ENCODE measurements at regions of chr5 and their contacts with region 1.

Region 1: GRCh38 chr5:169442403-169442874 is 141.1 kb upstream of the SPDL1 start:
- DNase-seq: no peak
- H3K4me3 ChIP-seq: no peak overlapping the region
- H3K4me3 Mint-ChIP-seq: peak overlapping the region; percentile 25
- H3K27ac Mint-ChIP-seq: peak overlapping the region; percentile 23
- H3K4me1 ChIP-seq: peaks cover 62% of the 10 kb centered on the region
- H3K4me1 Mint-ChIP-seq: peaks cover 46% of the 10 kb centered on the region
- H3K27me3 ChIP-seq: no peaks in the 10 kb centered on the region
- H3K27me3 Mint-ChIP-seq: no peaks in the 10 kb centered on the region
- CTCF ChIP-seq: no peak

Region 2: GRCh38 chr5:168822745-168823281 is 619.6 kb before region 1 on chr5:
- CTCF ChIA-PET with region 1: no interaction called
- POLR2A ChIA-PET with region 1: no interaction called
- intact Hi-C with region 1: no loop called
- DNase-seq: no peak
- H3K4me3 ChIP-seq: no peak overlapping the region
- H3K4me3 Mint-ChIP-seq: no peak overlapping the region
- H3K27ac Mint-ChIP-seq: no peak overlapping the region
- H3K4me1 ChIP-seq: no peaks in the 10 kb centered on the region
- H3K4me1 Mint-ChIP-seq: no peaks in the 10 kb centered on the region
- H3K27me3 ChIP-seq: 0 out of 2 replicates have a peak, but pooled peaks cover 1% of the 10 kb centered on the region
- H3K27me3 Mint-ChIP-seq: peaks cover 3% of the 10 kb centered on the region
- CTCF ChIP-seq: no peak

Region 3: DNA sequence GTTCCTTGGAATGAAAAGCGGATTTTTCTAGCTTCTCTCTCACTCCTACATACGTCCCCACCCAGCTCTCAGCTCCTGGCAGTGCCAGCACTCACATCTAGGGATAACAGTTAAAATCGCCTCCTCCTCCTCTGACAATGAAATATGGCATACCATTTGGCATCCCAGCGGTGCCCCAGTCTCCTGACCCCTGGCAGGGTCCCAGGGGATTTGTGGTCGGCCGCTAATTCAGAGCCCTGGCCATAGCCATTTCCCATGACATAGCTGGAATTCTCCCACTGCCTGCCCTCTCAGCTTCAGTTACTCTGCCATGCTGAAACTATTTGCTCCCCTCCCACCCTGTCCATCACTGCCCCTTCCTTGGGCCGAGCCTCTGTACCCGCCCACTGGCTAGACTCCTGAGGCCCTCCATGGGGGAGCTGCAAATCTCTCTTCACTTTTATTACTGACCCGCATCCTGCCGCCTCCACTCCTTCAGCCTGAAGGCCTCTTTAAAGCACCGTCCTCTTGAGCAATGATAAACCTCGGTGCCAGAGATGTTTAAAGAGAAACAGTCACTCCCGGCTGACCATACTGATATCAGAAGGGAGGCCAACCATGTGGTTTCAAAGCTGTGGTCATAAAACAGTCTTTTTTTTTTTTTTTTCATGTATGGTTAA is 281.3 kb before region 1 on chr5:
- CTCF ChIA-PET with region 1: no interaction called
- POLR2A ChIA-PET with region 1: no interaction called
- intact Hi-C with region 1: loop called (anchors 5 kb)
- DNase-seq: peak; percentile 79 to 83
- H3K4me3 ChIP-seq: no peak overlapping the region
- H3K4me3 Mint-ChIP-seq: no peak overlapping the region
- H3K27ac Mint-ChIP-seq: peak overlapping the region; percentile 34
- H3K4me1 ChIP-seq: peaks cover 38% of the 10 kb centered on the region
- H3K4me1 Mint-ChIP-seq: peaks cover 42% of the 10 kb centered on the region
- H3K27me3 ChIP-seq: no peaks in the 10 kb centered on the region
- H3K27me3 Mint-ChIP-seq: no peaks in the 10 kb centered on the region
- CTCF ChIP-seq: no peak

Region 4: DNA sequence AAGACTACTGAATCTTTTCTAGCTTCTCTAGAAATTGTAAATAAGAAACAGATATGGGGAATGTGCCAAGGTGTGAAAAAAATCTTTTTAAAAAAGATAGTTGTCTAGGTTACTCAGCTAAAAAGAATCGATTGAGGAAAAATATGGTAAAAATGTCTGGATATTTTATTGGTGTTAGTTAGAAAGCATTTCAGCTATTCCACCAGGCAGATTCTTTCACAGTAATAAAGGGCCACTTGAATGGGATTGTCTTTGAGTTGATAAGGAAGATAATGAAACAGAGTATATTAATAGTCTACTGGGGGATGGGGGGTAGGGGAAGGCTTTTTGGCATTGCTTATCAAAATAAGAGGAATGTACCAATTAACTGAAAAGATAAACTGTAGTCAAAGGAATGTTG is 193.4 kb before region 1 on chr5:
- CTCF ChIA-PET with region 1: no interaction called
- POLR2A ChIA-PET with region 1: no interaction called
- intact Hi-C with region 1: loop called (anchors 1 kb)
- DNase-seq: peak; percentile 48 to 49
- H3K4me3 ChIP-seq: no peak overlapping the region
- H3K4me3 Mint-ChIP-seq: no peak overlapping the region
- H3K27ac Mint-ChIP-seq: peak overlapping the region; percentile 91
- H3K4me1 ChIP-seq: peaks cover 30% of the 10 kb centered on the region
- H3K4me1 Mint-ChIP-seq: peaks cover 64% of the 10 kb centered on the region
- H3K27me3 ChIP-seq: no peaks in the 10 kb centered on the region
- H3K27me3 Mint-ChIP-seq: no peaks in the 10 kb centered on the region
- CTCF ChIP-seq: no peak

Region 5: DNA sequence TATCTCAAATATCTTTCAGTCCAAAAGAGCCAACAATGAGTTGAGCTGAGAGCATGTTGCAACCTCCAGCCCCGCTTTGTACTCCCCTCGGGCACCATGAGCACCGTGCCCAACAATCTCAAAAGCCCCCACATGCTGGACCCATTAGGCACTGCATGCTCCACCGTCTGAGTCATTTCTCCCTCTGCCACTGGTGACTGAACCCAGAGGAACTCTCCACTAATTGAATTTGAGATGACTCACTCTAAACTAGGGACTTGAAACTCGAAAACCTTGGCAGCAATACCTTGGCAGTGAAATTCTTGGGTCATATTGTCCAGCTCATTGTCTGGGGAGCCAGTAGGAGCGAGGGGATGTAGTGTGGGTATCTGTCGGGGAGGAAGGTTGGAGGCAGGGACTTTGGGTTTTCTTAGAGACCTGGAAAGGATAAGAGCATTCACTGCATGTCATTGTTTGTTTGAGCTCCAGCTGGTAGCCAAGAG is 91.6 kb before region 1 on chr5:
- CTCF ChIA-PET with region 1: interaction called, 3 read pairs
- POLR2A ChIA-PET with region 1: no interaction called
- intact Hi-C with region 1: loop called (anchors 5 kb)
- DNase-seq: no peak
- H3K4me3 ChIP-seq: no peak overlapping the region
- H3K4me3 Mint-ChIP-seq: no peak overlapping the region
- H3K27ac Mint-ChIP-seq: peak overlapping the region; percentile 69
- H3K4me1 ChIP-seq: peaks cover 17% of the 10 kb centered on the region
- H3K4me1 Mint-ChIP-seq: peaks cover 30% of the 10 kb centered on the region
- H3K27me3 ChIP-seq: no peaks in the 10 kb centered on the region
- H3K27me3 Mint-ChIP-seq: no peaks in the 10 kb centered on the region
- CTCF ChIP-seq: no peak

Region 6: GRCh38 chr5:169426784-169427183 is 15.7 kb before region 1 on chr5:
- CTCF ChIA-PET with region 1: interaction called, 3 read pairs
- POLR2A ChIA-PET with region 1: no interaction called
- intact Hi-C with region 1: loop called (anchors 1 kb)
- DNase-seq: peak in 1 of 2 experiments; percentile 27
- H3K4me3 ChIP-seq: no peak overlapping the region
- H3K4me3 Mint-ChIP-seq: no peak overlapping the region
- H3K27ac Mint-ChIP-seq: no peak overlapping the region
- H3K4me1 ChIP-seq: peaks cover 32% of the 10 kb centered on the region
- H3K4me1 Mint-ChIP-seq: peaks cover 30% of the 10 kb centered on the region
- H3K27me3 ChIP-seq: no peaks in the 10 kb centered on the region
- H3K27me3 Mint-ChIP-seq: no peaks in the 10 kb centered on the region
- CTCF ChIP-seq: no peak

Region 7: DNA sequence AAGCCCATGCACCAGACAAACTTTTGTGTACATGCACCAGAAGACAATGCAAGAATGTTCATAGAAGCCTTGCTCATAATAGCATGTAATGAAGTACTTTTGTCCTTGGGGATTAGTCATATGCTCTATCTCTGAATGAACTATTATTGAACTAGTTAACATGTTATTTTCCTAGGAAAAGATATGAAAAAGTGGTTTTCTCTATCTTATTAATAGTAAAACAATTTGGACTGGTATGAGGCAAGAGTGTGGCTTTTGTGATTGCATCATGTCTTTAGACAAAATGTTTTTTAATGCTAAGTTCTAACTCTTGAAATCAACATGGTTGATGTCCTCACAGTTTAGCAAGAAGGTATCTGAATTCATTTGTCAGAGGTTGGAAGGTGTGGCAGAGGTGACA is 85.4 kb after region 1 on chr5:
- CTCF ChIA-PET with region 1: no interaction called
- POLR2A ChIA-PET with region 1: no interaction called
- intact Hi-C with region 1: loop called (anchors 5 kb)
- DNase-seq: no peak
- H3K4me3 ChIP-seq: no peak overlapping the region
- H3K4me3 Mint-ChIP-seq: no peak overlapping the region
- H3K27ac Mint-ChIP-seq: peak overlapping the region; percentile 22
- H3K4me1 ChIP-seq: peaks cover 15% of the 10 kb centered on the region
- H3K4me1 Mint-ChIP-seq: peaks cover 11% of the 10 kb centered on the region
- H3K27me3 ChIP-seq: no peaks in the 10 kb centered on the region
- H3K27me3 Mint-ChIP-seq: no peaks in the 10 kb centered on the region
- CTCF ChIP-seq: no peak

Region 8: GRCh38 chr5:171335616-171336015 is 1893.2 kb after region 1 on chr5:
- CTCF ChIA-PET with region 1: no interaction called
- POLR2A ChIA-PET with region 1: no interaction called
- intact Hi-C with region 1: no loop called
- DNase-seq: no peak
- H3K4me3 ChIP-seq: no peak overlapping the region
- H3K4me3 Mint-ChIP-seq: peak overlapping the region; percentile 71
- H3K27ac Mint-ChIP-seq: no peak overlapping the region
- H3K4me1 ChIP-seq: peaks cover 11% of the 10 kb centered on the region
- H3K4me1 Mint-ChIP-seq: no peaks in the 10 kb centered on the region
- H3K27me3 ChIP-seq: no peaks in the 10 kb centered on the region
- H3K27me3 Mint-ChIP-seq: peaks cover 4% of the 10 kb centered on the region
- CTCF ChIP-seq: no peak

Measured in Caco-2 (cell line).